ENCODE measurements at regions of chr17 and their contacts with region 1.

Region 1: DNA sequence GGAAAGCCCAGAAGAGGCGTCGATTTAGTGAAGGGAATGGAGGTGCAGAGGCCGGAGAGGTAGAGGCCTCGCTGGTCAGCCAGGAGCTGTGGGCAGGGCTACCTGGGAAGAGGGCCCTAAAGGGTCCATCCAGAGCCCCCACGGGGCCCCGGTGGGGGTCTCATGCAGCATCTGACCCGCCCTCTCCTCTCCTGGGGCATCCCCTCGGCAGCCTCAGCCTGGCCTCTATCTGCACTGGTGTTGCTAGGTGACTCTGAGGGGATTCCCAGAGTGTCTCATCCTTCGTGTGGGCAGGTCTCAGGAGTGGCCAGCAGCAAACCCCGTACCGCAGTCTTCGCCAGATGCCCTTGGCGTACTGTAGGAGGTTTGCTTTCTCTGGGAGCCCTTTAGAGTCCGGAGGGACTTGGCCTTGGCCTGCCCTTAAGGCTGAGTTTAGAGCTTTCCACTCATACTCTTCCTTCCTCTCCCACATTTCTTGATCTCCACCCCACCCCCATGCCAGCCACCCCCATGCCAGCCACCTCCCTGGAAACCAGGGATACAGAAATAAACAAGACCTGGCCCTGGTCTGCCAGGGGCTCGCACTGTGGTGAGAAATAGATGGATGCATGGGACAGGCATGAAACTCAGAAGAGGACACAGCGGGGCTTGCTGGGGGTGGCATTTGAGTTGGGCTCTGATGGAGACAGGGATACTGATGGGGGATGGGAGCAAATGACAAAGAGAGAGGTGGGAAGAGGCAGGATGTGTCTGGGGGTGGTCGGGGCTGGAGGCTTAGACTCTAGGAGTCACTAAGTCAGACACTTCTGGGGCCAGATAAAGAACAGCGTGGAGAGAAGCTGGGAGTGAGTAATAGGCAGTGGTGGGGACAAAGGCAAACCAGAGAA is 9.9 kb downstream of the SLC5A10 start:
- DNase-seq: no peak

Region 2: DNA sequence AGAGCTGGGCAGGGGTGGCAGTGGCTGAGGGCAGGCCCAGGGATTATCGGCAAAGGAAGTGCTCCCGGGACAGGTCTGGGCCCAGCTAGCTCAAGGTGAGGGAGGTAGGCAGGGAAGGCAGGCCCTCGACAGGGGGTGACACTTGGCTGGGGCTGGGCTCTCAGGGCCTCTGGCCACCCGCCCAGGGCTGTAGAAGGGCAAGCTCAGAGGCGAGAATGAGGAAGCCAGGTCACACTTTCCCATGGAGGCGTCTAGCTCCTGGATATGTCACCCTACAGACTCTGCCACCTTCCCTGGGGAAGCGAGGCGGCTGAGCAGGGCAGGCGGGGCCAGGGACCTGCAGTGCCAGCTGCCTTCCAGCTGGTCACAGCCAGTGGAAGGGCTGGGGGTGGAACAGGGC is 23.6 kb after region 1 on chr17:
- intact Hi-C with region 1: loop called (anchors 2 kb)
- DNase-seq: no peak